PC-3 (cell line): ENCODE measurements at regions of chr20 and their contacts with region 1.

Region 1: GRCh38 chr20:56636716-56637115 is 7.6 kb downstream of the TFAP2C start:
- DNase-seq: peak; percentile 98
- ATAC-seq: peak; percentile 68
- H3K4me3 ChIP-seq: peak overlapping the region; percentile 8; the same call in 1 of the 2 replicates
- H3K27ac ChIP-seq: peak overlapping the region; percentile 73
- H3K4me1 ChIP-seq: peaks cover 55% of the 10 kb centered on the region
- H3K27me3 ChIP-seq: no peaks in the 10 kb centered on the region
- CTCF ChIP-seq: no peak

Region 2: DNA sequence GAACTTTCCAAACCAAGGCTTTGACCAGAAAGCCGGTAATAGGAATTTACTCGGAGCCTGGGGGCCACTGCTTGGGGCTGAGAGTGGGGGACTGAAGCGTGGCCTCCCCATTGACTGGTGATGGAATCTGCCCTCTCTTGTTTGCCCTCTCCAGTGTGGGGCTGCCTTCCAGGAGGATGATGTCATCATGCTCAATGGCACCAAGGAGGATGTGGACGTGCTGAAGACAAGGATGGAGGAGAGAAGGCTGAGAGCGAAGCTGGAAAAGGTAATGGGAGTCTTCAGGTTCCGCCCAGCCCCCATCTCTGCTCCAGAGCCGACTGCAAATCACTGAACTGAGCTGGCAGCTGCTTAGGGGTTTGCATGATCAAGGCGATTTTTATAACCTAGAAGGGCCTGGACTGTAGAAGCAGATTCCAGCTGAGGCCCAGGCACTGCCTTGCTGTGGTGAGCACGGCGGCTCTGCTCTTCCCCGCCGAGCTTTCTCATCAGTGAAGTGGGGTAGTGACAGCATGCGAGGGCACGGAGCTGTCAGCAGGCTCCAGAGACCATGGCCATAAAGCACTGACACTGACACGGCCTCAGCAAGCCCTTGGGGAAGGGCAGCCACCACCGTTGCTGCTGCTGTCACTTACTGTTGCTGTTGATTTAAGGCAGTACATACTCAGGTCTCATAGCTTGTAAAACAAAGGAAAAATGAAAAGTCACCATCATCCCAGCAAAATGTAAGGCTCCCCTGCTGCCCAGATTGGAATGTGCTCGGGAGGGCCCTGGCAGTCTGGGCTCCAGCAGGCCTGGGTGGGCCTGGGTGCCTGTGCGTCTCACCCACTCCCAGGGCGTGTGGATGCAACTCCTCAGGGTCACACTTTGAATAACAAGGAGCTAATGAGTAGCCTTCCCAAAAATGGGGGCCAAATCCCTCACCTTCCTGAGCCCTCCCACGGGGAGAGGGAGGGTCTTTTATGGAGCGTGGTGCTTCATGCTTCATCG is 123.3 kb before region 1 on chr20:
- CTCF ChIA-PET with region 1: no interaction called
- POLR2A ChIA-PET with region 1: no interaction called
- intact Hi-C with region 1: no loop called
- DNase-seq: no peak
- ATAC-seq: no peak
- H3K4me3 ChIP-seq: no peak overlapping the region
- H3K27ac ChIP-seq: no peak overlapping the region
- H3K4me1 ChIP-seq: no peaks in the 10 kb centered on the region
- H3K27me3 ChIP-seq: no peaks in the 10 kb centered on the region
- CTCF ChIP-seq: no peak

Region 3: DNA sequence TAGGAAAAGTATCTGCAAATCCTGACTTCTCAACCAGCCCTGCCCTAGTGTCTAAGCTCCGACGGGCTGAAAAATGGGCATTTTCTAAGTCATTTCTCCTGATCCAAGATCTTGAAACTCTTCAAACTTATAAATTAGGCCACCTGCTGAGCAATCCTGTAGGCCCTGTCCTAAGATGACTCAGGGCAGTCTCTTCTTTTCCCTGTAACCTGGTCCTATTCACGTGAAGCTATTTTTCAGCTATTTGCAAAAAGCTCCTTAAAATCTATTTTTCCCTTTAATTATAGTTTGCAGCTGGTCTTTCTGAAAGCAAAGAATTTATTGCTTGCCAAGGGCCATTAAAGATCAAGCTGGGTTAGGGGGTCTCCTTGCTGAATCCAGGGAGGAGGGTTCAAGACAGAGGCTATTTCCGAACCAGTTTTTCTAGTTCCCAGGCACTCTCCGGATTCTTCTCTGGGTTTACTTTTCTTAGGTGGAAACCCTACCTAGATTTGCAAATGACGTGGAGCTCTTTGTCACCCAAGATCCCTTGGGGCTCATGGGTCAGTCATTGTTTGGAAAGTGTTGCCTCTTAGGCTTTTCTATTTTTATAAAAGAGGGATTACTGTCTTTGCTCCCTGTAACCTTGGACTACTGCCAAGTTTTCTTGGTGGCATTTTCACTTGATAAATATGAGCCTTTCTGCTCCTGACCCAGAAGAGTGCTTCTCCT is 70.3 kb before region 1 on chr20:
- CTCF ChIA-PET with region 1: no interaction called
- POLR2A ChIA-PET with region 1: no interaction called
- intact Hi-C with region 1: no loop called
- DNase-seq: peak; percentile 93
- ATAC-seq: peak; percentile 56
- H3K4me3 ChIP-seq: no peak overlapping the region
- H3K27ac ChIP-seq: peak overlapping the region; percentile 71
- H3K4me1 ChIP-seq: peaks cover 13% of the 10 kb centered on the region
- H3K27me3 ChIP-seq: no peaks in the 10 kb centered on the region
- CTCF ChIP-seq: no peak

Region 4: DNA sequence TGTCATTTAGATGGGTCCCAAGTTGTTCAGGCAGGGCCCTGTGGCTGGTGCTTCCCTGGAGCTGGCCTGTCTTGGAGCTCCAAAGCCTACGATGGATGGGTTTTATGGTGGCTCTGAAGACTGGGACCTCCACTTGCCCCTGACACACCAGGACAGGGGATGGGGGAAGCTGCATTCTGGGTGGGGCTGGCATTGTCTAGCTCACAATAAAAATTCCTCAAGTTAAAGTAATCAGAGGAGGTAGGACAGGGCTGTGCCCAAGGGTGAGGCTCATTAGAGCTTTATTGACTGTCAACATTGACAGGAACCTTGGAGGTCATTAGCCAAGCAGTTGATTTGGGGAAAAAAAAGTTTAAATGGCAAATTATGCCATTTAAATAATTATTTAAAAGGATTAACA is 28.1 kb after region 1 on chr20:
- CTCF ChIA-PET with region 1: interaction called, 3 read pairs
- POLR2A ChIA-PET with region 1: interaction called, 13 read pairs
- intact Hi-C with region 1: loop called (anchors 1 kb)
- DNase-seq: peak; percentile 57
- ATAC-seq: peak; percentile 68
- H3K4me3 ChIP-seq: no peak overlapping the region
- H3K27ac ChIP-seq: no peak overlapping the region
- H3K4me1 ChIP-seq: peaks cover 12% of the 10 kb centered on the region
- H3K27me3 ChIP-seq: no peaks in the 10 kb centered on the region
- CTCF ChIP-seq: no peak

Region 5: DNA sequence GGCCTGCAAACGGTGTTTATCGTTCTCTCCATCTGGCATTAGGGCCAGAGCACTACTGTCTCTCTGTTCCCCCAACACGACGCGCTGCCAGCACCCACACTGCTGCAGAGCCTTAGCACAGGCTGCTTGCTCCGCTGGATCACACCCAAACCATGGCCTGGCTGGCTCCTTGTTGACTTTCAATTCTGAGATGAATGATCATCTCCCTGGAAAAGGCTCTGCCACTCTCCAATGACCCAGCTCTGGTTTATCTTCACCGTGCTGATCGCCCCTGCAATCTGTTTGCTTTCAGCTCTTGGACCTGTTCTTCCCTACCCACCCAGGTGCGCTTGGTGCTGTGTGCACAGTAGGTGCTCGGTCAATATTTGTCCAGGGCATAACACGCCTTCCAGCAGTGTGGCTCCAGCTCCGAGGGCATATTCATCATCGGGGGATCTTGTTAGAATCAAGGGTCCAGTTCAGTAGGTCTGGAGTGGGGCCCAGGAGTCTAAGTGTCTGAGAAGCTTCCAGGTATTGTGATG is 98.5 kb after region 1 on chr20:
- CTCF ChIA-PET with region 1: no interaction called
- POLR2A ChIA-PET with region 1: no interaction called
- intact Hi-C with region 1: no loop called
- DNase-seq: no peak
- ATAC-seq: no peak
- H3K4me3 ChIP-seq: no peak overlapping the region
- H3K27ac ChIP-seq: no peak overlapping the region
- H3K4me1 ChIP-seq: peaks cover 6% of the 10 kb centered on the region; the same call in 1 of the 2 replicates
- H3K27me3 ChIP-seq: no peaks in the 10 kb centered on the region
- CTCF ChIP-seq: no peak

Region 6: DNA sequence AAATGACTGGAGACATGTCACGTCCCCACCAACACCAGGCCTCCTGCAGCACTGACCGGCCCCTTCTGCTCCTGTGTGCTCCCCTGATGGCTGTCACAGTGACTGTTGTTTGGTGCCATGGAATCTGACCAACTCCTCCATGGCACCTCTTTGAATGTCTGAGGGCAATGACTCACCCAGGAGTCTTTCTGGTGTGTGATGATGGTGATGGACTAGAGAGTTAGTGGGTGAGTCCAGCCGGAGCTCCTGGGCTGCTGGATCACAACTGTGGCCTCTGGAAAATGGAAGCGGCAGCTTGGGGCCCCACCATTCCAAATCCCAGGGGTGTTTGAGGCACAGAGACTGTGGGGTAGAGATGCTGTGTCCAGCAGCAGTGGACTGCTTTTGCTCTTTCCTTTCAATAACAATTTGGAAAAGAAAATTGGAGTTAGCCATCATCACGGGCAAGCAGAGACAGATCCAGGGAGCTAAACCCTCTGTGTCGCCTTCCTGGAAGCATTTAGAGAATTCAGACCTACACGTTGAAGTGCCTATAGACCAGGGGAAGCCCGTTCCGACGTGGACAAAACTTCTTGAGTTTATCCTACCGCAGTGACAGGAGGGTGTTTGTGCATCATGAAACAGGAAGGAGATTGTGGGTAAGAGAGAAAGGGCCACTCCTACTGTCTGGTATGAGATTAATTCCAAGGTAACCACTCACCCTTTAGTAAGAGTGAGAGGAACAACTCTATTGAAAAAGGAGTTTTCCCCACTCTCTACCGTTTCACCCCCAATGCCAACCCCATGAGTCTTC is 125.9 kb after region 1 on chr20:
- CTCF ChIA-PET with region 1: interaction called, 12 read pairs
- POLR2A ChIA-PET with region 1: no interaction called
- intact Hi-C with region 1: no loop called
- DNase-seq: peak; percentile 46
- ATAC-seq: peak; percentile 44
- H3K4me3 ChIP-seq: no peak overlapping the region
- H3K27ac ChIP-seq: no peak overlapping the region
- H3K4me1 ChIP-seq: peaks cover 9% of the 10 kb centered on the region; the same call in 1 of the 2 replicates
- H3K27me3 ChIP-seq: no peaks in the 10 kb centered on the region
- CTCF ChIP-seq: no peak